HEK293 (cell line): ENCODE measurements at regions of chr17 and their contacts with region 1.

Region 1: DNA sequence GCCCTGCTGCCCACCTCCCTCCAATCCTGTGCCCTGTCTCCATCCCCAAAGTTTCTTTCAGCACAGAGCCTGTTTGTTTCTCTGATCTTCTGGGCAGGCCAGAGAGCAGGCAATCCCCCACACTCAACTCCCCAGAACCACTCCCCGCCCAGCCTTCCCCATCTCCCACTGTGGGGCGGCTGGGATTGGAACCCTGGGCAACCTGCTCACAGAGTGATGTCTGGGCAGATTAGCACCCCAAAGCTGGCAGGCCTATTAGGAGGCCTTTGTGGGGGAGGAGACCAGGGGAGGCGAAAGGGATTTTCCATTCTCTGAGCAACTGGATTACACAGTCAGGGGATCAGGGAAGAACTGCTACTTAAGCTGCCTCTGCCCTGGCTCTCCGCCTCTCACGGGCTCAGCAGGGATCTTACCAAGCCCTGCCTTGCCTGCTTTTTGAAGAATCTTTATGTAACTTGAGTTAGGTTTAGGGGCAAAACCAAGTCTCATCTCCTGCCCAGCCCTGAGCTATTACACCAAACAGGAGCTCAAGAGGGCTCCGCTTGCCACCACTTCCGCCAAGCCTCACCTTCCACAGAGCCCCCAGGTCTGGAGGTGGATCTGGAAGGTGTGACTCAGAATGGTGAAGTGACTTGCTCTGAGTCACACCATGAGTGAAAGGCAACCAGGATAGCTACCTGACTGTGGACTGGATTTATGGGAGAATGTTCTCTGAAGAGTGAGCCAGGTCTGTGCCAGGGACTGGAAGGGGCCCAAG is 16.0 kb upstream of the LHX1 start:
- H3K4me3 ChIP-seq: no peak overlapping the region
- H3K27ac ChIP-seq: peak overlapping the region; percentile 56
- H3K4me1 ChIP-seq: peaks cover 16% of the 10 kb centered on the region
- CTCF ChIP-seq: no peak

Region 2: GRCh38 chr17:36768394-36768793 is 152.9 kb before region 1 on chr17:
- CTCF ChIA-PET with region 1: no interaction called
- POLR2A ChIA-PET with region 1: interaction called, 11 read pairs
- H3K4me3 ChIP-seq: no peak overlapping the region
- H3K27ac ChIP-seq: no peak overlapping the region
- H3K4me1 ChIP-seq: 0 out of 2 replicates have a peak, but pooled peaks cover 3% of the 10 kb centered on the region
- CTCF ChIP-seq: no peak

Region 3: GRCh38 chr17:36972186-36972700 is 51.0 kb after region 1 on chr17:
- CTCF ChIA-PET with region 1: no interaction called
- POLR2A ChIA-PET with region 1: no interaction called
- H3K4me3 ChIP-seq: no peak overlapping the region
- H3K27ac ChIP-seq: no peak overlapping the region
- H3K4me1 ChIP-seq: peaks cover 21% of the 10 kb centered on the region
- CTCF ChIP-seq: no peak